A549 (cell line): ENCODE measurements at regions of chr1 and their contacts with region 1.

Region 1: DNA sequence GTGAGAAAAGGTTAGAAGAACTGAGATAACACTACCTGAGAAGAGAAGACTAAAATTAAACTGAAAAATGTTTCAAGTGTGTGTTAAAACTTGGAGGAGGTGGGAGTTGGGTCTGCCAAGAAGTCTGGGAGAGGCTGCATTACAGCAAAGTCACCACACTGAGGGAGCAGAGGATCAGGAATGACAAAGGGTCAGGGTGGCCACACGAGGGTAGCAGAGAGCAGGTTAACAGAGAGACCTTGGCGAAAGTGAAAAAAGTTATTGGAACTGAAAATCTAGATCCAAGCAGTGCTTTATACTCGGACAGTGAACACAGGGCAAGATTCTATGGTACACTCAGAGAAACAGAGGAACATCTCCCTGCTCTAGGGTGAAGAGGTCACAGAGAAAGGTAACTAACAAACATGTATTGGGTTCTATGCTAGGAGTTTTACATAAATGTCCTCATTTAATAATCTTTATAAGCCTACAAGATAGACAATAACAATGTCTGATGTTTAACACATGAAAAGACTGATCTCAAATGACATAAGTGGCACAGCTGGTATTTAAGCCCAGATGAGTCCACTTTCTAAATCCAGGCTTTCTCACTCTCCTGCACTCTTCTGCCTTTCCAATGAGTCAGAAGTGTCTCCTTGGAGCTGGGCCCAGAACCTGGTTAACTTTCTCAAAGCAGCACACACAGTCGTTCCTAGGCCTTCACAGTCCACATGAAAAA is 10.3 kb upstream of the CADM3 start:
- DNase-seq: peak; percentile 61 to 77
- ATAC-seq: peak; percentile 98 to 100
- H3K4me3 ChIP-seq: no peak overlapping the region
- H3K27ac ChIP-seq: 0 out of 6 replicates have a peak overlapping the region, but pooled peaks of 1 of the 2 experiments have one; percentile 31
- H3K4me1 ChIP-seq: peaks cover 8% of the 10 kb centered on the region
- CTCF ChIP-seq: peak; percentile 100
- EP300 ChIP-seq: no peak
- POLR2A ChIP-seq: no peak
- RAD21 ChIP-seq: peak; percentile 99 to 100

Region 2: DNA sequence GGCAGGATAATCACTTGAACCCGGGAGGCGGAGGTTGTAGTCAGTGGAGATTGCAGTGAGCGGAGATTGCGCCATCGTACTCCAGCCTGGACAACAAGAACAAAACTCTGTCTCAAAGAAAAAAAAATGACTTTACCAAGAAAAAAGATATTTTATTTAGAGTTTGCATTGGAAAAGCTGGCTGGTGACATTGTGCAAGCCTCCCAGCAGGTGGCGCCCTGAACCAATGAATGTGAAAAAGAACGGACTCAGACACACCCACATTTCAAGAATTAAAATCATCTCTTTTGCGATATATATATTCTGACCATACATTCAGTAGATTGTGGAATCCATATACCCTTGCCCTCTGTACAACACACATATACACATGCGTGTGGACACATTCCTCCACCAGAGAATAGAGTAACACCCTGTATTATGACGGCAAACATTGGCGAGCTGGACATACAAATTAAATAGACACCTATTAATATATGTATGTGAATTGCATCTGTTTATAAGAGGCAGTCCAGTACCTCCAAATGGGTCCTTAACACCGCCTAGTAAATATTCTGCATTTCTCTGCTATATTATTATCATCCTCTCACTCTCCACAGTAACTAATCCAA is 28.8 kb before region 1 on chr1:
- CTCF ChIA-PET with region 1: interaction called, 36 read pairs
- POLR2A ChIA-PET with region 1: no interaction called
- DNase-seq: peak; percentile 59 to 61
- ATAC-seq: peak; percentile 68 to 81; a peak in 3 of 6 replicates
- H3K4me3 ChIP-seq: no peak overlapping the region
- H3K27ac ChIP-seq: no peak overlapping the region
- H3K4me1 ChIP-seq: no peaks in the 10 kb centered on the region
- CTCF ChIP-seq: peak; percentile 88
- EP300 ChIP-seq: no peak
- POLR2A ChIP-seq: no peak
- RAD21 ChIP-seq: peak; percentile 84 to 85

Region 3: GRCh38 chr1:159141584-159142390 is 19.4 kb before region 1 on chr1:
- CTCF ChIA-PET with region 1: interaction called, 36 read pairs
- POLR2A ChIA-PET with region 1: no interaction called
- DNase-seq: peak in 1 of 2 experiments; percentile 19
- ATAC-seq: peak; percentile 49 to 56; a peak in 5 of 6 replicates
- H3K4me3 ChIP-seq: peak overlapping the region; percentile 38
- H3K27ac ChIP-seq: no peak overlapping the region
- H3K4me1 ChIP-seq: no peaks in the 10 kb centered on the region
- CTCF ChIP-seq: no peak
- EP300 ChIP-seq: no peak
- POLR2A ChIP-seq: no peak
- RAD21 ChIP-seq: no peak

Region 4: DNA sequence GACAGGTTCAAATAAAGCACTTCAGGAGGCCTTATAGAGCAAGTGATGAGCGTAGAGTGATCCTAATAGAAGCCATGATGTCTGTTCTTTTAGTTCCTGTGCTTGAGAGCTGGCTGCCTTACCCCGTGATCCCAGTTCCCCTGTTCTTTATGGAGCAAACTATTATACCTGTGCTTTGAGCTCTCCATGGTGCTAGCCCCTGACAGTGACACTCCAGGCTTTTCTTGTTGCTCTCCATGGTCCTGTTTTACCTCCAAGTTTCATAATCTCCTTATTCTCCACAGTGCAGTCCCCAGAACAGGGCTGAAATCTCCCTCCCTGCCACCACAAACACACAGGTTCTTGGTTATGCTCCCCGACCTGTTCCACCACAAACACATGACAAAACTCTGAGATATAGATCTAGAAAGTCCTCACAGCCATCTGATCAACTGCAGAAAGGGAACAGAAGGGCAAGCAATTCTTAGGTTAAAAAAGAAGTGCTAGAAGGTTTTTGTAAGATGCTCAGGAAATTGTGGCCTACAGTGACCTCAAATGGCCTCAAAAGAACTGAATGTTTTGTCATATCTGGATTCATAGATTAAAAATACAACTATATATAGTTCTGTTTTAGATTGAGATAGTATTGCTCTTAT is 16.2 kb after region 1 on chr1:
- CTCF ChIA-PET with region 1: interaction called, 20 read pairs
- POLR2A ChIA-PET with region 1: no interaction called
- DNase-seq: peak; percentile 40 to 60
- ATAC-seq: peak; percentile 71 to 81
- H3K4me3 ChIP-seq: no peak overlapping the region
- H3K27ac ChIP-seq: no peak overlapping the region
- H3K4me1 ChIP-seq: peaks cover 5% of the 10 kb centered on the region; the same call in 2 of the 3 replicates
- CTCF ChIP-seq: no peak
- EP300 ChIP-seq: no peak
- POLR2A ChIP-seq: no peak
- RAD21 ChIP-seq: no peak

Region 5: GRCh38 chr1:159197561-159198557 is 36.7 kb after region 1 on chr1:
- CTCF ChIA-PET with region 1: interaction called, 90 read pairs
- POLR2A ChIA-PET with region 1: interaction called, 3 read pairs
- DNase-seq: peak; percentile 57 to 75
- ATAC-seq: peak; percentile 84 to 95
- H3K4me3 ChIP-seq: no peak overlapping the region
- H3K27ac ChIP-seq: no peak overlapping the region
- H3K4me1 ChIP-seq: no peaks in the 10 kb centered on the region
- CTCF ChIP-seq: peak; percentile 73
- EP300 ChIP-seq: no peak
- POLR2A ChIP-seq: no peak
- RAD21 ChIP-seq: peak; percentile 54 to 58

Region 6: GRCh38 chr1:159207774-159208173 is 46.6 kb after region 1 on chr1:
- CTCF ChIA-PET with region 1: interaction called, 106 read pairs
- POLR2A ChIA-PET with region 1: no interaction called
- DNase-seq: no peak
- ATAC-seq: no peak
- H3K4me3 ChIP-seq: no peak overlapping the region
- H3K27ac ChIP-seq: no peak overlapping the region
- H3K4me1 ChIP-seq: peaks cover 13% of the 10 kb centered on the region; the same call in 1 of the 3 replicates
- CTCF ChIP-seq: no peak
- EP300 ChIP-seq: no peak
- POLR2A ChIP-seq: no peak
- RAD21 ChIP-seq: no peak